Posterior vena cava (tissue), 2 donors: ENCODE measurements at regions of chr9 and their contacts with region 1.

Region 1: DNA sequence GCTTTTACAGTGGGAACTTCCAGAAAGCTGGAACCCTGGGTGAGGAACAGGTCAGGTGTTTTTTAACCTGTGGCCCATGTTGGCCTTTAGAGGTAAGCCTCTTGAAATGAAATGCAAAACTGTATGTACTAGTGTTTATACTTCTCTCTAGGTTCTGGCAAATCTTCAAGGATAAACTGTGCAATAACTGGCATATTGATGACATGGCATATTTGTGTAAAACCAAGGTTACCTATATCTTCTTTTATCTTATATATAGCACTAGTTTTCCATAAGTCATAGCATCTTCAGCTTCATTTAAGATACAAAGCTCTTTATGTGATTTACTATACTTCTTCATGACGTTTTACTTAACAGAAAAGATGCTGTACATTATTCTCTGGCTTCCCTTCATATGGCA is 7.4 kb upstream of the IARS1 start:
- DNase-seq: no peak

Region 2: DNA sequence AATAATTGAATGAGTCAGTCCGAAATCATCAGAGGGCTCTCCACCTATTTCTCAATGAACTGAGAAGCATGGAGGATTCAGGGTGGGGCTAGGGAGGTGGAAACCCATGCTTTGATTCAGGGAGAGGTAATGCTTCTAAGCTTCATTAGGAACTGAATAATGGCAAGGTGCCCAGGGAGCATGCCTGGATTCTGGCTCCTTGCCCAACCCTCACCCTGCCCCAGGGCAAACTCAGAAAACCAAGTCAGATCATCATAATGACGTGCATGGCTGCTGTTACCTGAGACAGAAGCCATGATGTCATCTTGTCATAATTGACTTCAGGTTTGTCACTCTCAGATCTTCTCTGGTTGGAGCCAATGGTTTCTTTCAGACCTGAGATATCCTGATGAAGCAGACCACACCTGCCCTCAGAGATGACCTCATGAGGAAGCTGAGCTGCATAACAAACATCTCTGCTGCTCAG is 1299.8 kb before region 1 on chr9:
- intact Hi-C with region 1: loop called in 1 of 2 experiments (anchors 5 kb)
- DNase-seq: no peak

Region 3: DNA sequence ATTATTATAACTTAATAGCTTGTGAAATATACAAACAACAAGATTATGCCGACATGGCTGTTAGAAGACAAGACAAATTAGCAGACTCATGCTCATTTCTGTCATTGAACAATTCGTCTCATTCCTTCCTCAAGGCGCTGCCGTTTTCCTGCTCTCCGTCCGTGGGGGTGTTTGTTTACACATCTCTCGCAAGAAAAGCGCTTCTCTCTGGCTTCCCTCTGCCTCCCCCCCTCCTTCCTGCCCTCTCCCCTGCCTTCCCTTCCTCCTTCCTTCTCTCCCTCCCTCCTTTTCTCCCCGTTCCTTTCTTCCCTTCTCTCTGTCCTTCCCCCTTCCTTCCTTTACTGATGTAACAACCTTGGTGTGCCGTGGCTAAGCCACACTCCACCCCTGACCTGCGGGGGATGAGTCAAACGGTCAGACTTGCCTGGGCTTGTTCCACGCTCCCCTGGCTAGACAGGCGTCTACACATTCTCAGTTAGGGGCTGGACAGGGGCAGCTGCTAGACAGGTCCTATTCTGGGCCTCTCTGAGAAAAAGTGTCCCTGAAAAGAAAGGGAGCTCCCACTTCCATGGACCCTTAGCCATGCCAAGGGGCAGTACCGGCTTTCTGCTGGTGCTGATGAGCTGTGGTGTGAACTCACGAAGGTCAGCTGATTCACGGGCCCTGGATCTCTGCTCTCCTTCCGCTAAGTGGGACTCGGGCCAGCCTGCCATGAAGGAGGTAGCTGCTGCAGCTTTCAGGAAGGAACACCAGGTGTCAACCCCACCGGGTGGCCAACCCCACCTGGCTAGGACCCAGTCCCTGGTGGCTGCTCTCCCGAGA is 153.7 kb before region 1 on chr9:
- intact Hi-C with region 1: no loop called
- DNase-seq: peak; percentile 93

Region 4: DNA sequence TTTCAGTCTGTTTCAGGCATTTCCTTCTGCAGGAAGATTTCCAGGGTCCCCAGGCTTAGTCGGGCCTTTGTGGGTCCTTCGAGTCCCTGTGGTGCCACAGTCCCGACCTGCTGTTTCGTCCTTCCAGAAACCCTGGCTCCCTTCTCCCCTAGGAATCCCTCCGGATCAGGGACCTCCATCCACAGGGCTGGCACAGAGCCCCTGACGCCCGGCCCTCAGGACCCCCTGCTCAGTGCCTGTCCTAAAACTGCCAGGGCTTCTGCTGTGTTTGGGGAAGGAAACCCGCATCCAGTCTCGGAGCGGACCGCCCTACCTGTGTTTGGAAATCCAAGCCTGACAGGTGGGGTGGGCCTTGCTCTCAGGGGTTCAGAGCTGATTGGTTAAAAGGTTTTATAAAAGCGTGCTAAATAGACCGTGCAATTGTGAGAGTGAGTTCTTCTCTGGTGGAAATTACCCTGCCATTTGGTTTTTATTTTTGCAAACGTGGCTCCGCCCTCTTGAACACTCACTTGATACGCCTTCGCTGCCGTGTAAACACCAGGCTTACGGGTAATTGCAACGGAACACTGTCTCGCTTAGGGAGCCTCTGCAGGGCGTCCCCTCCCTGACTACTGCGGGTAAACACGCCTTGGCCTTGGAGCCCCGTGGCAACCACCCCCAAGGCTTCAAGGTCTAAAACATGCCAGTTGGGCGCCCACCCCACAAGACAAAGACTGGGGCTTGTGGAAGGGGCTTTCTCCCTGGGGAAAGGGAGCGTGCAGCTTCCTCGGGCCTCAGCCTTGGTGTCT is 1396.6 kb after region 1 on chr9:
- intact Hi-C with region 1: no loop called
- DNase-seq: peak; percentile 69